Aorta (tissue), 5 donors: ENCODE measurements at regions of chr2 and their contacts with region 1.

Region 1: GRCh38 chr2:68467077-68467960 is at the starts of genes APLF and FBXO48:
- DNase-seq: peak; percentile 98 to 99
- ATAC-seq: peak; percentile 99
- H3K4me3 ChIP-seq: peak within 1 kb of the TSS; percentile 33 to 94
- H3K27ac ChIP-seq: peak within 1 kb of the TSS; percentile 11 to 20
- H3K4me1 ChIP-seq: no peaks in the 10 kb centered on the region
- H3K27me3 ChIP-seq: no peaks in the 10 kb centered on the region
- total RNA-seq, gene APLF: 7.9 to 8.7 TPM
- total RNA-seq, gene FBXO48: 1.0 to 1.5 TPM

Region 2: GRCh38 chr2:68709421-68709911 is 242.1 kb after region 1 on chr2:
- intact Hi-C with region 1: loop called in 1 of 2 experiments (anchors 5 kb)
- DNase-seq: no peak
- ATAC-seq: peak; percentile 62
- H3K4me3 ChIP-seq: no peak overlapping the region
- H3K27ac ChIP-seq: no peak overlapping the region
- H3K4me1 ChIP-seq: no peaks in the 10 kb centered on the region
- H3K27me3 ChIP-seq: no peaks in the 10 kb centered on the region

Region 3: DNA sequence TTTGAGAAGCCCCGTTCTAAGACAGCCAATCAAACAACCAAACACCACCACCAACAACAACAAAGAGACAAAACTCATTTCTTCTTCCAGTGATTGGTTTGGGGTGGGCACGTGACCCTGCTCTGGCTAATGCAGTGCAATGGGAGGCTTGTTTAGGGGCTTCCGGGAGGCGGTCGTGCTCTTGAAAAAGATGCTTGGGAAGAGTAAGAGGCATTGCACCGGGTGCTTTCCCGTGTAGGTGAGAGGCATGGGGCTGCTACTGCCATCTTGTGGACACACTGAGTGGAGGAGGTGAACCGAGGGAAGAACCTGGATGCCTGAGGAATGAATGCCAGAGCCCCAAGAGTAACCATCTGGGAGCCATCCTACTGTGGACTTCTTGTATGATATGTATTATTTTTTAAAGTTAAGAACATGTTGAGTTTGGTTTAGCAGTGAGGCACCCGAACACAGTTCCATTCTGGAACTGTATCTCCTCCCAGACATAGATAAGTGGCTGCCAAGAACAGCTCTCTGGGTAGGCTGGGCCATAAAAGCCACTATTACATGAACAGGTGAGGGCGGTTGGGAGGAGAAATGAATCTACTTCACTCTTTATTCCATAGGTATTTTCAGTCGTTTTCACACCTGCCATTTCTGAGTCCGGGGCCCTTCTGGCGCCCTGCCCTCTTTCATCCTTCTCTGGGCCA is 248.2 kb after region 1 on chr2:
- intact Hi-C with region 1: loop called (anchors 5 kb)
- DNase-seq: peak in 1 of 2 donors; percentile 59
- ATAC-seq: no peak
- H3K4me3 ChIP-seq: no peak overlapping the region
- H3K27ac ChIP-seq: no peak overlapping the region
- H3K4me1 ChIP-seq: no peaks in the 10 kb centered on the region
- H3K27me3 ChIP-seq: peaks cover 0 to 1% of the 10 kb centered on the region in 2 donors

Region 4: DNA sequence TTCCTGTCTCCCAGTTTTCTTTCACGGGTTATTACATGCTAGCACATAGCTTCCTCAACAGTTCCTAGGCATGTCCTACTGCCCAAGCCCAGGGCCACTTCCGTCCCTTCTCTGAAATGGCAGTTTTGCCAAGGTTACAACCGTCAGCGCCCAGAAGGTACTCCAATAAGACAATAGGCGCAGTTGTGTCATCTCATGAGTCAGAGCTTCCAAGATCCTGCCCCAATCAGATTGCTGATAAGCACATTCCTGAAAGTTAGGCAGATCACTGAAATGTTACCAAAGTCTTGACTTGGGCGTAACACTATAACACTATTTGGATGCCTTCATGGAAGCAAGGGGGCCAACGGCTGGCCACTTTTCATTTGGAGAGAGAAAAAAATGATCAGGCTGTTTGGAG is 451.2 kb after region 1 on chr2:
- intact Hi-C with region 1: loop called (anchors 5 kb)
- DNase-seq: no peak
- ATAC-seq: no peak
- H3K4me3 ChIP-seq: no peak overlapping the region
- H3K27ac ChIP-seq: no peak overlapping the region
- H3K4me1 ChIP-seq: no peaks in the 10 kb centered on the region
- H3K27me3 ChIP-seq: no peaks in the 10 kb centered on the region